Stomach (tissue), 19 donors: ENCODE measurements at regions of chr6 and their contacts with region 1.

Region 1: DNA sequence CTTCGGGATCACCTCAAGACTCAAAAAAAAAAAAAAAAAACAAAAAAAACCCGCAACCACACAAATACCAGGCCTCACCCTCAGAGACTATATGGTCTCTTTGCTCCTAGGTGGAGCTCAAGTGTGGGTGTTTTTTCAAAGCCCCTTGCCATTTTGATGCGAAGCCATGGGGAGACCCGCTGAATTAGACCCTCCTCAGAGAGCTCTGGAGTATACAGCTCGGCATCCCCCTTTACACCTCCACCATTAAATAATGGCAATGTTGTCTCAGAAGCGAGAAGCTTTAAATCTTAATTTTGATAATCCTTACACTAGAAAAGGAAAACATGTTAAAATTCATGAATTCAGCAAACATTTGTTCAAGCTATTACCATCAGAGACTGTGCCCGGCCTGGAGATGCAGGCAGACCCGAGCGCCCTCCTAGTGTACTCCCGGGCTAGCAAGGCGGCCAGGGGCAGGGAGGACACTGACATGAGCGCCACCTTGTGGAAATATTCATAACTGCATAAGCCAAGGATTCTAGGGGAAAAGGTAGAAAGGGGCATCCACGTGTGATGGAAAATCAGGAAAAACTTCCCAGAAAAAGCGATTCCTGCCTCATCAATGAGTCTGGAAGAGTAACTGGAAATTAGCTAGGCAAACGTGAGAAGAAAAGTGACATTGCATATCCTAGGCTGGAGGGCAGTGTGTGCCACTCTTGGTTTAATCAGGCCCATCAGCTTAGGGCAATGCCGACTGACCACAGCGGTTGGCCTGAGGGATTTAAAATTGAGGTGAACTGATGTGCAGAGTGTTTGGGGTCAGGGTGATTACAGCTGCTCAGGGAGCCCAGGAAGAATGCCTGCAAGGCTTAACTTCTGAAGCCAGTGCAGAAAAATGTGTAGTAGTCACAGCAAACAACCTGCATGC is 72.5 kb downstream of the B3GAT2 start:
- DNase-seq: peak; percentile 62 to 74
- H3K4me3 ChIP-seq: no peak overlapping the region
- H3K27ac ChIP-seq: no peak overlapping the region
- H3K4me1 ChIP-seq: peaks cover 0 to 5% (median 0%) of the 10 kb centered on the region in 4 donors
- H3K27me3 ChIP-seq: peaks cover 0 to 3% (median 0%) of the 10 kb centered on the region in 3 donors
- CTCF ChIP-seq: peak in 5 of 7 experiments; percentile 87 to 92 (median 90)
- EP300 ChIP-seq: no peak
- POLR2A ChIP-seq: no peak

Region 2: GRCh38 chr6:70304616-70305015 is 579.7 kb before region 1 on chr6:
- intact Hi-C with region 1: loop called (anchors 5 kb)
- DNase-seq: no peak
- H3K4me3 ChIP-seq: no peak overlapping the region
- H3K27ac ChIP-seq: no peak overlapping the region
- H3K4me1 ChIP-seq: no peaks in the 10 kb centered on the region
- H3K27me3 ChIP-seq: peaks cover 0 to 3% (median 0%) of the 10 kb centered on the region in 3 donors
- CTCF ChIP-seq: no peak
- EP300 ChIP-seq: no peak
- POLR2A ChIP-seq: no peak

Region 3: DNA sequence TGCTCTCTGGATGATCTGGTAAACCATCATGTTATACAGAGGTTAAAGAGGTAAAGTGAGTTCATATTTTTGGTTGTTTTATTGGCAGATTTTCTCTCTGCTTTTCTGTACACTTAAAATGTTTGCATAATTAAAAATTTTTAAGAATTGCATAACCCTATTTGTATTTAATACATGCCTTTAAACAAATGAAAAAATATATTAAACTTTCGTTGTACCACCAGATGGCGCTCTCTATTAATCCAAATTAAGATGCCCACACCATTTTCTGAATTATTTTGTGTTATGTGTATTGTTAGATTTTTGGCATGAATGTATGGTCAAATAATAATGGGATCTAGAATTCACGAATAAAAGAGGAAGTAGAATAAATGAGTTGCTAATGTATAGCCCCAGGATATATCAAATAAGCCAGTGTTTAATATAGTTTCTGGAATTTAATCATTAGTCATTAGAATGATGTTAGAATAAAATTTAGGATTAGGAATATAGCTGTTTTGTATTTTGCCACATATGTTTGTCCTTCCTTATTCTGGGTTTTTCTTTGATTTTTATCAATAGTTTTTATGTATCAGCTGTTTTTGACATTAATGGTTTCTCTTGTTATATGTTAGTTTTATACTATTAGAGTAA is 177.7 kb before region 1 on chr6:
- intact Hi-C with region 1: loop called (anchors 10 kb)
- DNase-seq: peak in 1 of 2 donors; percentile 69
- H3K4me3 ChIP-seq: no peak overlapping the region
- H3K27ac ChIP-seq: no peak overlapping the region
- H3K4me1 ChIP-seq: peaks cover 0 to 39% (median 22%) of the 10 kb centered on the region in 4 donors
- H3K27me3 ChIP-seq: no peaks in the 10 kb centered on the region
- CTCF ChIP-seq: peak in 4 of 7 experiments; percentile 28 to 72 (median 52)
- EP300 ChIP-seq: no peak
- POLR2A ChIP-seq: no peak

Region 4: DNA sequence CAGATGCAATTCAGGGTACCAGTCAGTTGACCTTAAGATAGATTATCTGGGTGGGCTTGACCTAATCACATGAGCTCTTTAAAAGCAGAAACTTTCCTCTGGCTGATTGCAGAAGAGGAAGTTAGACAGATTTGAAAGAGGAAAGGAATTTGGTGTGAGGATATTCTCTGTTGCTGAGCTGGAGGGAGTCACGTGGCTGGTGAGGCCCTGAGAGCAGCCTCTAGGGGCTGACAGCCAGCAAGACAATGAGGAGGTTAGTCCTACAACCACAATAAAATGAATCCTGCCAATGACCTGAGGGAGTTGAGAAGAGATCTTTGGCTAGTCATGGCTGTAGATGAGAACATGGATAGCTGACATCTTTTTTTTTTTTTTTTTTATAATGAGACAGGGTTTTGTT is 159.6 kb after region 1 on chr6:
- intact Hi-C with region 1: no loop called
- DNase-seq: no peak
- H3K4me3 ChIP-seq: no peak overlapping the region
- H3K27ac ChIP-seq: no peak overlapping the region
- H3K4me1 ChIP-seq: no peaks in the 10 kb centered on the region
- H3K27me3 ChIP-seq: no peaks in the 10 kb centered on the region
- CTCF ChIP-seq: no peak
- EP300 ChIP-seq: no peak
- POLR2A ChIP-seq: no peak

Region 5: DNA sequence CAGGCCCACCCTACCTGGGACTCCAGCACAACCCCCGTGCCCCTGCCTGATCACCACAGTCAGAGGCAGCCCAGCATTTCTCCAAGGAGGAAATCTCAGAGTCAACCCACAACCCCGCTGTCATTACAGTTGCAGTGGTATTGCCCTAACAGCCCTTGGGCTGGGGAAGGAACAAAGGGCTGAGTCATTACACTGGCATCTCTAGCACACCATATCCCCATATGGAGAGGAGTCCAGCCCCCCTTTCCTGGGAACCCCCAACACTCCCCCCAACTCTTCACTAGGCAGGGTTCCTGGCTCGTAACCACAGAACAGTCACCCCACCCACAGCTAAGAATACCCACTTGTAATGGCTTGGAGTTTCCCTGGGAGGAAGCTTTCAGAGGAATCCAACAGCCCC is 254.9 kb after region 1 on chr6:
- intact Hi-C with region 1: no loop called
- DNase-seq: no peak
- H3K4me3 ChIP-seq: no peak overlapping the region
- H3K27ac ChIP-seq: no peak overlapping the region
- H3K4me1 ChIP-seq: no peaks in the 10 kb centered on the region
- H3K27me3 ChIP-seq: no peaks in the 10 kb centered on the region
- CTCF ChIP-seq: no peak
- EP300 ChIP-seq: no peak
- POLR2A ChIP-seq: no peak

Region 6: GRCh38 chr6:71258078-71258866 is 373.9 kb after region 1 on chr6:
- intact Hi-C with region 1: no loop called
- DNase-seq: no peak
- H3K4me3 ChIP-seq: no peak overlapping the region
- H3K27ac ChIP-seq: no peak overlapping the region
- H3K4me1 ChIP-seq: peaks cover 0 to 6% (median 0%) of the 10 kb centered on the region in 4 donors
- H3K27me3 ChIP-seq: no peaks in the 10 kb centered on the region
- CTCF ChIP-seq: no peak
- EP300 ChIP-seq: no peak
- POLR2A ChIP-seq: no peak